ENCODE measurements at regions of chr9 and their contacts with region 1.

Region 1: GRCh38 chr9:14616188-14616982 is 76.8 kb downstream of the ZDHHC21 start:
- H3K4me3 Mint-ChIP-seq: no peak overlapping the region
- H3K27ac Mint-ChIP-seq: no peak overlapping the region
- H3K4me1 Mint-ChIP-seq: no peaks in the 10 kb centered on the region
- H3K27me3 Mint-ChIP-seq: no peaks in the 10 kb centered on the region

Region 2: GRCh38 chr9:14768405-14769229 is 152.2 kb after region 1 on chr9:
- intact Hi-C with region 1: loop called (anchors 1 kb)
- H3K4me3 Mint-ChIP-seq: no peak overlapping the region
- H3K27ac Mint-ChIP-seq: no peak overlapping the region
- H3K4me1 Mint-ChIP-seq: no peaks in the 10 kb centered on the region
- H3K27me3 Mint-ChIP-seq: peaks cover 3% of the 10 kb centered on the region

Region 3: DNA sequence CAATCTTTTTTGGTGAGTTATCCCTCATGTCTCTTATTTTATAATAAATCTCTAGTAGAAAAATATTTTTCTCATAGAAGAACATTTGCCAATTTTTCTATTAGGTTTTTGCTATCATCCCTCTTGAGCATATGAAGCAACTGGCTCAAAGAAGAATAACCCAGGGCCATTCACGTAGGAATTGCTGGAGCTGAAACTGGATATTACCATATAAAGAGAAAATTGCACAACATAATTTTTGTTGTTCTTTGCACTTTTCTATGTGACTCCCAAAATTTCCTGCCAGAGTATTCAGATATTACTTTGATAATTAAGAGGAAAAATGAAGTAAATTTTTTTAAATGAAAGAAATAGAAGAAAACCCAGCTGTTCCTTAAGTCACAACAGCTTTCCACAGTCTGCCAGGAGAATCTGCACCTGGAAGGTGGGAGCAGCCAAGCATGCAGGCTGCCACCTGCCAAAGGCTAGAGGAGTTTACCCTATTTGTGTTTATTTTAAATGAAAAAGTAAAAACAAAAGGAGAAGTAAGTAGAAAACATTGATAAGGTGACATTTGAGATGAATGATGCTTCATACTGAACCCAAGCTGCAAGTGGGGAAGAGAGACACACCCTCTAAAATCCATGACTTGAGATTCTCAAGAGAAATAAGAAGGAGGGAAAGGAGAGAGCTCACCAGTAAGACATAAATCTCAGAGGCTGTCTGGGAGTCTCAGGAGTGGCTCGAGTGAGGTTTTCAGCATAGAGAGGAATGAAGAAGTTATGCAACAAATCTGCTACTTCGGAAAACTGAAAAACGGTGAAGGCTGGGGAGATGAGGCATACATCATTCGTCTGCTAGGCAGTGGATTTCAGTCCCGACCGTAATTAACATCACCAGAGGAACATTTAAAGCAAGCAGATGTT is 325.4 kb after region 1 on chr9:
- intact Hi-C with region 1: no loop called
- H3K4me3 Mint-ChIP-seq: no peak overlapping the region
- H3K27ac Mint-ChIP-seq: no peak overlapping the region
- H3K4me1 Mint-ChIP-seq: no peaks in the 10 kb centered on the region
- H3K27me3 Mint-ChIP-seq: no peaks in the 10 kb centered on the region

Region 4: GRCh38 chr9:15142878-15143534 is 526.6 kb after region 1 on chr9:
- intact Hi-C with region 1: loop called (anchors 5 kb)
- H3K4me3 Mint-ChIP-seq: no peak overlapping the region
- H3K27ac Mint-ChIP-seq: no peak overlapping the region
- H3K4me1 Mint-ChIP-seq: no peaks in the 10 kb centered on the region
- H3K27me3 Mint-ChIP-seq: no peaks in the 10 kb centered on the region

Measured in dendritic cell treated with granulocyte-macrophage colony-stimulating factor and Interleukin-4, amounts not matched to agents 40 ng/mL and 50 ng/mL, for 4 days (primary cell).